ENCODE measurements at regions of chr1 and their contacts with region 1.

Region 1: DNA sequence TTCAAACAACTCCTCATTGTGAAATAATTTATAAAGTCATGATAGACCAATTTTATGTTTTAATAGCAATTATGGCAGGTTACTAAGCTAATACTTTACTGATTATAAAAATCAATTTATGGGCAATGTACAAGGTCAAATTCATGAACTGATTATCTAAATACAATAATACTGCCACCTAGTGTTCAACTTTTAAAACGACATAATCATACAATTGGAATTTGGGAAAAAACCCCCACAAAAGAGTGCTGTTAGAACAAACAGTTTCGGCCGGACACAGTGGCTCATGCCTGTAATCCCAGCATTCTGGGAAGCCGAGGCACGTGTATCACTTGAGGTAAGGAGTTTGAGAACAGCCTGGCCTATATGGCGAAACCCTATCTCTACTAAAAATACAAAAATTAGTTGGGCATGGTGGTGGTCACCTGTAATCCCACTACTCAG is 14.0 kb downstream of the GTF2B start:
- DNase-seq: peak; percentile 53
- H3K4me3 ChIP-seq: no peak overlapping the region
- H3K27ac ChIP-seq: peak overlapping the region; percentile 55
- H3K4me1 ChIP-seq: no peaks in the 10 kb centered on the region
- H3K27me3 ChIP-seq: no peaks in the 10 kb centered on the region
- CTCF ChIP-seq: peak; percentile 28 to 42

Region 2: GRCh38 chr1:88608139-88608943 is 269.1 kb before region 1 on chr1:
- CTCF ChIA-PET with region 1: no interaction called
- dilution Hi-C with region 1: no loop called
- in situ Hi-C with region 1: no loop called
- intact Hi-C with region 1: loop called (anchors 5 kb)
- DNase-seq: peak; percentile 28
- H3K4me3 ChIP-seq: no peak overlapping the region
- H3K27ac ChIP-seq: no peak overlapping the region
- H3K4me1 ChIP-seq: peaks cover 9% of the 10 kb centered on the region
- H3K27me3 ChIP-seq: no peaks in the 10 kb centered on the region
- CTCF ChIP-seq: peak; percentile 74 to 76

Region 3: GRCh38 chr1:88655685-88656299 is 221.6 kb before region 1 on chr1:
- CTCF ChIA-PET with region 1: no interaction called
- dilution Hi-C with region 1: no loop called
- in situ Hi-C with region 1: no loop called
- intact Hi-C with region 1: loop called (anchors 1 kb)
- DNase-seq: no peak
- H3K4me3 ChIP-seq: no peak overlapping the region
- H3K27ac ChIP-seq: no peak overlapping the region
- H3K4me1 ChIP-seq: no peaks in the 10 kb centered on the region
- H3K27me3 ChIP-seq: no peaks in the 10 kb centered on the region
- CTCF ChIP-seq: peak; percentile 53

Region 4: DNA sequence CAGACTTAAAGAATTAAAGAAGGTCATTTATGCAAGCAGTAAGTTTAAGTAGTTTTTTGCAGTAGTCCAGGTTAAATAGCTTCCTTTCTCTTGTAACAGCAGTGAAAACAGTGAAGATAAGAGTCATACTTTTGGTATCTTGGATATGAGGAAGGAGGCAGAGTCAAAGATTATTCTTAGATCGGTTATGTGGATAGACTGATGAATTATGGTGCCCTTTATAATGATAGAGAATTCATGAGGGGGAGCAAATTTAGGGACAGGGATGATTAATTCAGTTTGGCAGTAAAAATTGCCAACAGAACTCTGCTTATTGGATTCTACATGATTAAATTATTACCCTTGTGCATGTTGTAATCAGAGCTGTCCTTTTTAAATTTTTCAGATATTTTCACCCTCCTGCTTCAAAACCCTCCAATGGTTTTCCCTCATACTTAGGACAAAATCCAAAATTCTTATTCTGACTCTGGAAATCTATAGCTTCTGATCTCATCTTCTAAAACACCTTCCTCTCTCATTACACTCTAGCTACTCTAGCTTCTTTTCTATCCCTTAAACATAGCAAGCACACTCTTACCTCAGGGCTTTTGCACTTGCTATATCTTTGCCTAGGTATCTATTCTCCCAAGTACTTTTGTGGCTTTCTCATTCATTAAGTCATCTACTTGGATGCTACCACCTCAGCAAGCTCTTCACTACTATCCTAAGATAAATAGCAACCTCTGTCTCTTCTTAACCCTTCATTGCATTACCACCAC is 113.6 kb before region 1 on chr1:
- CTCF ChIA-PET with region 1: no interaction called
- dilution Hi-C with region 1: no loop called
- in situ Hi-C with region 1: no loop called
- intact Hi-C with region 1: no loop called
- DNase-seq: peak; percentile 20
- H3K4me3 ChIP-seq: no peak overlapping the region
- H3K27ac ChIP-seq: no peak overlapping the region
- H3K4me1 ChIP-seq: no peaks in the 10 kb centered on the region
- H3K27me3 ChIP-seq: no peaks in the 10 kb centered on the region
- CTCF ChIP-seq: no peak

Region 5: DNA sequence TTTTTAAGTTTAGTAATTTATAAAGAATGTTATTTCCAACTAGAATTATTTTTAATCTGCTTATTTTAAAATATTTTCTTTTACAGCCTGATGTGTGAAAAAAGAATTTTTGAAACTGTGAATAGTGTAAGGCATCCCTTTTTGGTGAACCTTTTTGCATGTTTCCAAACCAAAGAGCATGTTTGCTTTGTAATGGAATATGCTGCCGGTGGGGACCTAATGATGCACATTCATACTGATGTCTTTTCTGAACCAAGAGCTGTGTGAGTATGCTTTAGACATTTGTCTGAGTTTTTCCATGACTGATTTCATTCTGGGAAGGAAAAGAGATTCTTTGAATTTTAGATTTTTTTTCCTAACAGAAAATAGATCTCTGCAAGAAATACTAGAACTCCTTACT is 63.9 kb before region 1 on chr1:
- CTCF ChIA-PET with region 1: interaction called, 11 read pairs
- dilution Hi-C with region 1: no loop called
- in situ Hi-C with region 1: no loop called
- intact Hi-C with region 1: no loop called
- DNase-seq: no peak
- H3K4me3 ChIP-seq: no peak overlapping the region
- H3K27ac ChIP-seq: no peak overlapping the region
- H3K4me1 ChIP-seq: no peaks in the 10 kb centered on the region
- H3K27me3 ChIP-seq: no peaks in the 10 kb centered on the region
- CTCF ChIP-seq: no peak

Region 6: DNA sequence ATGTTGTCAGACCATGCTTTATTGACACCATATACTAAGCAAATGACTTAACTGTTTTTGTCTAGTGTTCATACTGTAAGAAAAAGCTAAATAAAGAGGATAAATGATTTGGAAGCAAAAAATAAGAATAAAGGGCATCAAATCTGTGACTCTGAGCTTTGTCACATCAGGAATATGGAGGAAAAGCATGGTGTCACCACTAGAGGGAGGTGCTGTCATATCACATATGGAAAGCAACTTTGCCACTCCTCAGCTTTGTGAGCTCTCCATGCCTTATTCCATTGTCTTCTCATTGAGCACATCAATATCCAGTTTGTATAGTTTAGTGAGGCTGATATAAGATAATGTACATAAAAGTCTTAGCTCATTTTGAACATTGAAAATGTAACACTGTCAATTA is 208.4 kb after region 1 on chr1:
- CTCF ChIA-PET with region 1: no interaction called
- dilution Hi-C with region 1: no loop called
- in situ Hi-C with region 1: no loop called
- intact Hi-C with region 1: no loop called
- DNase-seq: peak; percentile 27
- H3K4me3 ChIP-seq: no peak overlapping the region
- H3K27ac ChIP-seq: no peak overlapping the region
- H3K4me1 ChIP-seq: no peaks in the 10 kb centered on the region
- H3K27me3 ChIP-seq: no peaks in the 10 kb centered on the region
- CTCF ChIP-seq: peak; percentile 80 to 86